B cell (primary cell): ENCODE measurements at regions of chr11 and their contacts with region 1.

Region 1: DNA sequence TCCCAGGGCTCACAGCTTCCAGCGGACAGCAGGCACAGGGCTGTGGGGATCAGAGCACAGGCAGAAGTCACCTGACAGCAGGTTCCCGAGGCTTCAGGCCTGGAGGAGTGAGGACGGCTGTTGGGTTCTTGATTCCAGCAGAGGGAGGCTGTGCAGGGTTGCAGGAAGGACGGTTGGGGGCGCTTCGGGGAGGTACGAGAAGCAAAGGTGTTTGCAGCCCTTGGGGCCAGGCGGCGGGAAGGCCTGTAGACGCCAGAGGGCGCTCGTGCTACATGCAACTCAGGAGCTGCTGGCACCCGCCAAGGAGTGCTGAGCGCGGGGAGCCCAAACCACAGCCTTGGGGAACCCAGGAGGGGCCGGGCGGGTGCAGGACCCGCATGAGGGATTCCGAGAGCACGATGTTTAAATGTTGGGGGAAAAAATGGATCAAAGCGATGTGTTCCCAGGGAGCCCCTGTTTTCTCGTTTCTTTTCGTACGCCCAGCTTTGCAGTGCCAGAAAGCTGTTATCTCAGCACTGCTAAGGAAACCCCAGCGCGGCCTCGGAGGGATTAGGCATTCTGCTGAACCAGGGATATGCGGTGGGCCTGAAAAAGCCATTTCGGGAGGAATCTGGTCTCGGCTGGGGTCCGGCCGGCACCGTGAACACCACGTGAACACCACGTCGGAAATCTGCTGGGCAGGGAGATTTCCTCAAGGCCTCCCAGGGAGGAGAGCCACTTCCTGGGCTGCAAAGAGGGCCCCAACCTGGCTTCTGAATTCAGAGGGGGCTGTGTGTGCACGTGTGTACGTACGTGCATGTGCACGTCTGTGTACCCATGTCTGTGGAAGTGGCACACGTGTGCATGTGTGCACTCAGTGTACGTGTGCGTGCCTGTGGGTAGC is 88.1 kb downstream of the KCNQ1 start:
- DNase-seq: peak; percentile 93
- ATAC-seq: peak; percentile 89
- H3K4me3 ChIP-seq: peak overlapping the region in 2 of 5 experiments; percentile 9 to 19
- H3K4me3 Mint-ChIP-seq: peak overlapping the region; percentile 85
- H3K27ac ChIP-seq: no peak overlapping the region
- H3K27ac Mint-ChIP-seq: no peak overlapping the region
- H3K4me1 ChIP-seq: peaks cover 19 to 23% of the 10 kb centered on the region in 2 donors
- H3K4me1 Mint-ChIP-seq: peaks cover 22% of the 10 kb centered on the region
- H3K27me3 ChIP-seq: peaks cover 0 to 14% (median 0%) of the 10 kb centered on the region in 4 experiments
- H3K27me3 Mint-ChIP-seq: no peaks in the 10 kb centered on the region
- CTCF ChIP-seq: peak; percentile 99

Region 2: DNA sequence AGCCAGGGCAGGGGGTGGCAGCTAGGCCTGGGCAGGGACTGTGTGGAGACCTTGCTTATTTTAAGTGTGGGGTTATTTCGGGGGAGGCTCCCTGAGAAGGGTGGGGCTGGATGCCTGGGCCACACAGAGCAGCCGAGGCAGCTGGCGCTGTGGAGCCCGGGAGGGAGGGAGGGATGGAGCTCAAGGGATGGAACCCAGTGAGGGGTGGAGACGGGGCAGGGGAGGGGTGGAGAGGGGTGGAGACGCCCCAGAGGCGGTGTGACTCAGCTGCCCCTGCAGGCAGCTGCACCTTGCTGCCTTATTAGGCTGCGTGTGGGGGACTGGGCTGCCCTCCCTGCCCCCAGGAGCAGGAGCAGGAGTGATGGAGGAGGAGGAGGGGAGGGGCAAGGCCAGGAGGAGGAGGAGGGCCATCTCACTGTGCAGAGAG is 142.2 kb before region 1 on chr11:
- CTCF ChIA-PET with region 1: interaction called, 11 read pairs
- POLR2A ChIA-PET with region 1: no interaction called
- intact Hi-C with region 1: no loop called
- DNase-seq: no peak
- ATAC-seq: no peak
- H3K4me3 ChIP-seq: no peak overlapping the region
- H3K4me3 Mint-ChIP-seq: peak overlapping the region; percentile 55
- H3K27ac ChIP-seq: no peak overlapping the region
- H3K27ac Mint-ChIP-seq: peak overlapping the region; percentile 66
- H3K4me1 ChIP-seq: peaks cover 100% of the 10 kb centered on the region in 2 donors
- H3K4me1 Mint-ChIP-seq: peaks cover 83% of the 10 kb centered on the region
- H3K27me3 ChIP-seq: no peaks in the 10 kb centered on the region
- H3K27me3 Mint-ChIP-seq: no peaks in the 10 kb centered on the region
- CTCF ChIP-seq: no peak

Region 3: DNA sequence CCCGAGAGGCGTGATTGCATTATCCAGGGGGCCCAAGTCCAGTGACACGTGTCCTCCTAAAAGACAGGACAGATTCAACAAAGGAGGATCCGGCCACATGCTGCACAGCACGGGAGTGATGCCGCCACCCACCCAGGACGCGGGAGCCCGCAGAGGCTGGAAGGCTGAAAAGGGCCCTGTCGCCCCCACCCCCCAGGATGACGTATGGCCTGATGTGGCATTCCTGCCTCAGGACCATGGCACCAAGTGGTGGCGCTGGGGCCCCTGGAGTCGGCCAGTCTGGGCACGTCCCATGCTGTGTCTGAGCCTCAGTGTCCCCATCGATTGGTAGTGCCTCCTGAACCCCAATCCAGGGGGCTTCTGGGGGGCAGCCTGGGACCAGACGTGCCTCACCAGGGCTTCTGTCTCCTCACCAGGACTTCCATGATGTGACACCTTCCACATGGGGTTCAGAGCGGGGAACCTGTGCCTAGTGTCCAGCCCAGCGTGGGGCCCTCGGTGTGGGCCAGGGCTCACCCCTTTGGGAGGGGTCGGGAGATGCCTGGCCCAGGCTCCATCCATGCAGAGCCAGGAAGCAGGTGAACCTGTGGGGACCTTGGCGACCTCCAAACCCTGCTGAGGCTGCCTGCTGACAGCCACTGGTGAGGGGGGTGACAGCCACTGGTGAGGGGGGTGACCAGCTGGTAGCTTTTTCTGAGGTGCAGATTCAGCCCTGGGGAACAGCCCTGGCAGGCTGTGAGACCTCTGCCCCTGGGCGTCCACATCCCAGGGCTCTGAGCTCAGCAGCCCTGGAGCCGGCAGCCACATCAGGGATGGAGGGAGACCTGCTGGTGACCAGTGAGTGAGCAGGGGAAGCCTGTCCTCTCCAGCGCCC is 12.8 kb before region 1 on chr11:
- CTCF ChIA-PET with region 1: interaction called, 11 read pairs
- POLR2A ChIA-PET with region 1: no interaction called
- intact Hi-C with region 1: no loop called
- DNase-seq: no peak
- ATAC-seq: no peak
- H3K4me3 ChIP-seq: no peak overlapping the region
- H3K4me3 Mint-ChIP-seq: no peak overlapping the region
- H3K27ac ChIP-seq: no peak overlapping the region
- H3K27ac Mint-ChIP-seq: no peak overlapping the region
- H3K4me1 ChIP-seq: peaks cover under 1 to 11% of the 10 kb centered on the region in 2 donors
- H3K4me1 Mint-ChIP-seq: peaks cover 12% of the 10 kb centered on the region
- H3K27me3 ChIP-seq: no peaks in the 10 kb centered on the region
- H3K27me3 Mint-ChIP-seq: no peaks in the 10 kb centered on the region
- CTCF ChIP-seq: no peak

Region 4: GRCh38 chr11:2761131-2762030 is 228.4 kb after region 1 on chr11:
- CTCF ChIA-PET with region 1: no interaction called
- POLR2A ChIA-PET with region 1: no interaction called
- intact Hi-C with region 1: no loop called
- DNase-seq: no peak
- ATAC-seq: no peak
- H3K4me3 ChIP-seq: no peak overlapping the region
- H3K4me3 Mint-ChIP-seq: no peak overlapping the region
- H3K27ac ChIP-seq: no peak overlapping the region
- H3K27ac Mint-ChIP-seq: no peak overlapping the region
- H3K4me1 ChIP-seq: no peaks in the 10 kb centered on the region
- H3K4me1 Mint-ChIP-seq: no peaks in the 10 kb centered on the region
- H3K27me3 ChIP-seq: no peaks in the 10 kb centered on the region
- H3K27me3 Mint-ChIP-seq: peaks cover under 1% of the 10 kb centered on the region
- CTCF ChIP-seq: no peak

Region 5: GRCh38 chr11:2901854-2902783 is 369.2 kb after region 1 on chr11:
- CTCF ChIA-PET with region 1: interaction called, 13 read pairs
- POLR2A ChIA-PET with region 1: no interaction called
- intact Hi-C with region 1: no loop called
- DNase-seq: peak; percentile 88
- ATAC-seq: peak; percentile 97
- H3K4me3 ChIP-seq: peak overlapping the region; percentile 36 to 87 (median 66)
- H3K4me3 Mint-ChIP-seq: peak overlapping the region; percentile 85
- H3K27ac ChIP-seq: no peak overlapping the region
- H3K27ac Mint-ChIP-seq: peak overlapping the region; percentile 78
- H3K4me1 ChIP-seq: peaks cover 9 to 26% of the 10 kb centered on the region in 2 donors
- H3K4me1 Mint-ChIP-seq: peaks cover 20% of the 10 kb centered on the region
- H3K27me3 ChIP-seq: no peaks in the 10 kb centered on the region
- H3K27me3 Mint-ChIP-seq: peaks cover 5% of the 10 kb centered on the region
- CTCF ChIP-seq: no peak

Region 6: GRCh38 chr11:3091791-3092602 is 559.1 kb after region 1 on chr11:
- CTCF ChIA-PET with region 1: interaction called, 83 read pairs
- POLR2A ChIA-PET with region 1: no interaction called
- intact Hi-C with region 1: no loop called
- DNase-seq: peak; percentile 83
- ATAC-seq: peak; percentile 92
- H3K4me3 ChIP-seq: no peak overlapping the region
- H3K4me3 Mint-ChIP-seq: no peak overlapping the region
- H3K27ac ChIP-seq: no peak overlapping the region
- H3K27ac Mint-ChIP-seq: no peak overlapping the region
- H3K4me1 ChIP-seq: peaks cover 0 to 6% of the 10 kb centered on the region in 2 donors
- H3K4me1 Mint-ChIP-seq: no peaks in the 10 kb centered on the region
- H3K27me3 ChIP-seq: peaks cover 0 to 7% (median 0%) of the 10 kb centered on the region in 4 experiments
- H3K27me3 Mint-ChIP-seq: peaks cover 18% of the 10 kb centered on the region
- CTCF ChIP-seq: peak; percentile 98